AG04449 (cell line): ENCODE measurements at regions of chr15 and their contacts with region 1.

Region 1: DNA sequence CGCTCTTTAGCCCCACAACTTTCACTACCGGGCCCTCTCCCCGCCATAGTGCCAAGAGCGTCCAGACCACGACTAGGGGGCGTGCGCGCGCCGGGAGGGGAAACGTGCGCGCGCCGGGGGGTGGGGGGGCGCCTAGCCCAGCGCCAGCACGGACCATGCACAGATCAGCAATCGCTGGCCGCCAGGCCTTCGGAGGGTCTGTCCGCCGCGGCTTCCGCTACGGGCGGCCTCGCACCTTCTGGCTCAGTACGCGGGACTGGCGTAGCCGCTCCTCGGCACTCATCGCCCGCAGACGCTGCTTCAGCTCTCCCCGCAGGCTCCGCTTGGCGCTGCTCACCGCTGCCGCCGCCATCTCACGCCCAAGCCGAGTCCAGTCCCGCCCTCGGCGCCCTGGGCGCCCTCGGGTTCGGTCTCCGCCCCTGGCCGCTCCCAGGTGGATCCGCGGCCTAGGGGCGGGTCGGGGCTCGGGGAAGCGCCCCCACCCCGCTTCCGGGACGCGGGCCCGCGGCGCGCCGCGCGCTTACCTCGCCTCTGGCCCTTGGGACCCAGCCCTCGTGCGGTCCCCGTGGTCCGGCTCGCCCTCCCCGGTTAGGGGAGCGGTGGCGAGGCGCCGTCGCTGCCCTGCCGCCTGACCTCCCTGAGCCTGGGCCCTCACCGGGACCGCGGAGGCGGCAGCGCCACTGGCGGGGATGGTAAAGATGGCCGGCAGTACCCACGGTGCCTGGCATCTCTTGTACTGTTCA is at the start of gene MTHFS:
- DNase-seq: no peak
- H3K4me3 ChIP-seq: peak within 1 kb of the TSS; percentile 78
- CTCF ChIP-seq: peak; percentile 61

Region 2: GRCh38 chr15:79881254-79881653 is 15.6 kb before region 1 on chr15:
- CTCF ChIA-PET with region 1: interaction called, 26 read pairs
- POLR2A ChIA-PET with region 1: no interaction called
- DNase-seq: no peak
- H3K4me3 ChIP-seq: no peak overlapping the region
- CTCF ChIP-seq: no peak